B cell (primary cell): ENCODE measurements at regions of chr2 and their contacts with region 1.

Region 1: GRCh38 chr2:158753641-158754611 is 41.2 kb upstream of the DAPL1 start:
- DNase-seq: peak; percentile 61
- ATAC-seq: peak; percentile 62
- H3K4me3 ChIP-seq: no peak overlapping the region
- H3K4me3 Mint-ChIP-seq: no peak overlapping the region
- H3K27ac ChIP-seq: no peak overlapping the region
- H3K27ac Mint-ChIP-seq: no peak overlapping the region
- H3K4me1 ChIP-seq: no peaks in the 10 kb centered on the region
- H3K4me1 Mint-ChIP-seq: no peaks in the 10 kb centered on the region
- H3K27me3 ChIP-seq: peaks cover 0 to 7% (median 1%) of the 10 kb centered on the region in 4 experiments
- H3K27me3 Mint-ChIP-seq: peaks cover 20% of the 10 kb centered on the region
- CTCF ChIP-seq: peak; percentile 93

Region 2: DNA sequence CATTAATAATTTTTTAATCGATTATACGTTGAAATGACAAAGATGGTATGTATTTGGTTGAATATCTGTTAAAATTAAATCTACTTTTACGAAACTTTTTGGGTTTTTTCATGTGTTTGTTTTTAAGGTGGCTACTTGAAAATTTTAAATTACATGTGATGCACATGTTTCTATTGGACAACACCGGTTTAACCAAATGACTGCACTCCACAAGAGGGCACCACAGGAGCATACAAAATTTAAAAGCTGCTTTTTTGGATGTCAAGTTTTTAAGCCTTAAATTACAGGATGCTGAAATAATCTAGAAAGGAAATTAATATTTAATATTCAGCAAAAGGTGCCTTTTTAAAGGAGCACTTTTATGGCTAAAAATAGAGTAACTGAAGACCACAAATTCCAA is 976.5 kb before region 1 on chr2:
- CTCF ChIA-PET with region 1: no interaction called
- POLR2A ChIA-PET with region 1: no interaction called
- intact Hi-C with region 1: loop called (anchors 10 kb)
- DNase-seq: peak; percentile 21
- ATAC-seq: no peak
- H3K4me3 ChIP-seq: no peak overlapping the region
- H3K4me3 Mint-ChIP-seq: no peak overlapping the region
- H3K27ac ChIP-seq: no peak overlapping the region
- H3K27ac Mint-ChIP-seq: no peak overlapping the region
- H3K4me1 ChIP-seq: no peaks in the 10 kb centered on the region
- H3K4me1 Mint-ChIP-seq: no peaks in the 10 kb centered on the region
- H3K27me3 ChIP-seq: no peaks in the 10 kb centered on the region
- H3K27me3 Mint-ChIP-seq: no peaks in the 10 kb centered on the region
- CTCF ChIP-seq: peak; percentile 56

Region 3: DNA sequence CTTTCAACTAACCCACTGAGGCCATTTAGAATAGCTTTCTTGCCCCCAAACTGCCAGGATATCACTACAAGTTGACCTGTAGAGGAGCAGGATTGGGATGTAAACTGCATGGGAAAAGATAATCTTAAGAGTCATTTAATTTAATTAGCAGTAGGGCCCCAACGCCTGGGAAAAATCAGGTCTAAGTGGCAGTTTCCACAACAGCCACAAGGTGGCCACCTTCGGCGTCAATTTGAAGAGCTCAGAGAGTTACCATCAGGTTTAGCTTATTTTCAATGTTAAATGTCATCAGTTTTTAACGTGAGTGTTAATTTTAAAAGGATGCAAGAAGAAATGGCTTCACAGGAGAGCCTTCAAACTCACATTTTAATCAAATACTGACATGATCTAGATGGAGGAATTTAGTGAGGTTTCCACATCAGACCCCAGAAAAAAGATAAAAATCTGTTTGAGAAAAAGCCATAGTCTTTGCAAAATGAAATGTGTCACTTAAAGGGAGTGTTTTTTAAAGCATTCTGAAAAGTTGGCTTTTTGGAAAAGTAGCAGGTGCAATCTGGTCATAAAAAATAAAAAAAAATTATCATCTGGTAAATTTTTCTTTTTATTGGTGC is 729.5 kb before region 1 on chr2:
- CTCF ChIA-PET with region 1: interaction called, 106 read pairs
- POLR2A ChIA-PET with region 1: no interaction called
- intact Hi-C with region 1: loop called (anchors 1 kb)
- DNase-seq: peak; percentile 51
- ATAC-seq: peak; percentile 60
- H3K4me3 ChIP-seq: no peak overlapping the region
- H3K4me3 Mint-ChIP-seq: no peak overlapping the region
- H3K27ac ChIP-seq: no peak overlapping the region
- H3K27ac Mint-ChIP-seq: no peak overlapping the region
- H3K4me1 ChIP-seq: no peaks in the 10 kb centered on the region
- H3K4me1 Mint-ChIP-seq: no peaks in the 10 kb centered on the region
- H3K27me3 ChIP-seq: no peaks in the 10 kb centered on the region
- H3K27me3 Mint-ChIP-seq: no peaks in the 10 kb centered on the region
- CTCF ChIP-seq: peak; percentile 90

Region 4: GRCh38 chr2:158034199-158034866 is 719.6 kb before region 1 on chr2:
- CTCF ChIA-PET with region 1: interaction called, 78 read pairs
- POLR2A ChIA-PET with region 1: no interaction called
- intact Hi-C with region 1: loop called (anchors 1 kb)
- DNase-seq: peak; percentile 33
- ATAC-seq: no peak
- H3K4me3 ChIP-seq: no peak overlapping the region
- H3K4me3 Mint-ChIP-seq: no peak overlapping the region
- H3K27ac ChIP-seq: no peak overlapping the region
- H3K27ac Mint-ChIP-seq: no peak overlapping the region
- H3K4me1 ChIP-seq: no peaks in the 10 kb centered on the region
- H3K4me1 Mint-ChIP-seq: no peaks in the 10 kb centered on the region
- H3K27me3 ChIP-seq: peaks cover 0 to 8% (median 0%) of the 10 kb centered on the region in 4 experiments
- H3K27me3 Mint-ChIP-seq: peaks cover 27% of the 10 kb centered on the region
- CTCF ChIP-seq: peak; percentile 11

Region 5: GRCh38 chr2:158179660-158180059 is 574.3 kb before region 1 on chr2:
- CTCF ChIA-PET with region 1: interaction called, 102 read pairs
- POLR2A ChIA-PET with region 1: no interaction called
- intact Hi-C with region 1: loop called (anchors 1 kb)
- DNase-seq: peak; percentile 20
- ATAC-seq: no peak
- H3K4me3 ChIP-seq: no peak overlapping the region
- H3K4me3 Mint-ChIP-seq: no peak overlapping the region
- H3K27ac ChIP-seq: no peak overlapping the region
- H3K27ac Mint-ChIP-seq: no peak overlapping the region
- H3K4me1 ChIP-seq: peaks cover 0 to 3% of the 10 kb centered on the region in 2 donors
- H3K4me1 Mint-ChIP-seq: peaks cover 2% of the 10 kb centered on the region
- H3K27me3 ChIP-seq: peaks cover 0 to 5% (median 0%) of the 10 kb centered on the region in 4 experiments
- H3K27me3 Mint-ChIP-seq: peaks cover 12% of the 10 kb centered on the region
- CTCF ChIP-seq: peak; percentile 44

Region 6: GRCh38 chr2:158990397-158991209 is 236.7 kb after region 1 on chr2:
- CTCF ChIA-PET with region 1: no interaction called
- POLR2A ChIA-PET with region 1: no interaction called
- intact Hi-C with region 1: no loop called
- DNase-seq: no peak
- ATAC-seq: no peak
- H3K4me3 ChIP-seq: no peak overlapping the region
- H3K4me3 Mint-ChIP-seq: no peak overlapping the region
- H3K27ac ChIP-seq: no peak overlapping the region
- H3K27ac Mint-ChIP-seq: no peak overlapping the region
- H3K4me1 ChIP-seq: no peaks in the 10 kb centered on the region
- H3K4me1 Mint-ChIP-seq: peaks cover 2% of the 10 kb centered on the region
- H3K27me3 ChIP-seq: peaks cover 0 to 5% (median 0%) of the 10 kb centered on the region in 4 experiments
- H3K27me3 Mint-ChIP-seq: peaks cover 17% of the 10 kb centered on the region
- CTCF ChIP-seq: no peak